Left ventricle myocardium inferior (tissue), 1 donor: ENCODE measurements at regions of chr2 and their contacts with region 1.

Region 1: DNA sequence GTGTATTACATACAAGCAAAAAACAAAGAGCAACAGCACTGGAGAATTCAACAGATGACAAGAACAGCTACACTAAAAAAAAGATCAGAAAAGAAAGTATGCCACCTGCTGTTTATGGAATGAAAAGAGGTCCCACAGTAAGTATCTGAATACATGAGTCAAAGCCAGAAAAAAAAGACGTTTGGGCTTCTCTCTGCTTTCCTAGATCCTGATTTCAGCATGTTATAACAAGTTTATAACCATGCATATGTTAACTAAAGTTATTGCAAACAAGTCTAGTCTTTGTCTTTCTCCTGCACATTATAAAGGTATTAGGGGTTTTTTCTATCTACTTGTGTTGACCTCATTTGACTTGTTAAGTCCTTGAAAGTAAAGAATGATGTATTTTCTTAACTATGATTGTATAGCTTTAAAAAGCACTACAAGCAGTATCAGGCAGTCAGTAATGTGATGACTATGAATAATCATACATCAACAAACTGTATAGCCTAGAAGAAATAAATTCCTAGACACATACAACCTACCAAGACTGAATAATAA is 108.5 kb upstream of the COL5A2 start:
- DNase-seq: no peak
- H3K4me3 ChIP-seq: no peak overlapping the region
- H3K27ac ChIP-seq: no peak overlapping the region
- H3K4me1 ChIP-seq: peaks cover 4% of the 10 kb centered on the region
- H3K27me3 ChIP-seq: no peaks in the 10 kb centered on the region
- CTCF ChIP-seq: peak; percentile 57

Region 2: GRCh38 chr2:189115126-189115525 is 172.9 kb before region 1 on chr2:
- intact Hi-C with region 1: loop called (anchors 10 kb)
- DNase-seq: no peak
- H3K4me3 ChIP-seq: no peak overlapping the region
- H3K27ac ChIP-seq: no peak overlapping the region
- H3K4me1 ChIP-seq: peaks cover 10% of the 10 kb centered on the region
- H3K27me3 ChIP-seq: no peaks in the 10 kb centered on the region
- CTCF ChIP-seq: peak; percentile 39